ENCODE measurements at regions of chr2 and their contacts with region 1.

Region 1: DNA sequence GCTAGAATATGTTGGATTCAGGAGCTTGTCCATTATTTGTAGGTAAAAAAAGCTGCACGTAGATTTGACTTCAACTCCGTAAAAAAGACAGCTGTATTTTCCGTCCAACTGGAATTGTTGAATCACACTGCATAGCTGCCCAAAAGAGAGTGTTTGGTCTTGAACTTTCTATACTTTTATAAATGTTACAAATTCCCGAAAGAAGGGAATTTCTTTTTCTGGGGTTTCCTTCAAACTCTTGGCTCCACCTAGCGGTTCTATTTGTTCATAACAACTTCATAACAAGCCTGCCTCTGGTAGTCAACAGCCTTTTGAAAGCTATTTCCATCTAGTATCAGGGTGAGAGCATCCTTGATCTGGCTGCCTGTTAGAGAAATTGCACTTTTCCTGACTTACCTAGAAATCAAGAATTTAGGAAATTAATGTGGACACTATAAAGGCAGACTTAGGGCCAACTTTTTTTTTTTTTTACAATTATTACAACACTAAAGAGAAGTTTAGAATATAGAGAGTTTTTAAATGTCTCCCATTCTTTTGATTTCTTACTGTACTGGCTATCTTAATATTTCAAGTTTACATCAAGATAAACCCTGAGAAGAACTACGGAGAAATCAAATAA is 48.1 kb downstream of the TMEM185B start:
- DNase-seq: peak in 5 of 10 donors; percentile 25 to 63 (median 55)
- ATAC-seq: no peak
- H3K4me3 Mint-ChIP-seq: peak overlapping the region in 1 of 10 donors; percentile 5
- H3K27ac Mint-ChIP-seq: peak overlapping the region; percentile 49 to 98 (median 88)
- H3K4me1 Mint-ChIP-seq: peaks cover 13 to 53% (median 47%) of the 10 kb centered on the region in 4 donors
- H3K27me3 Mint-ChIP-seq: no peaks in the 10 kb centered on the region

Region 2: GRCh38 chr2:119678998-119679710 is 495.9 kb before region 1 on chr2 and contains the start of gene TMEM177:
- POLR2A ChIA-PET with region 1: interaction called, 18 read pairs
- DNase-seq: peak; percentile 79 to 92 (median 86)
- ATAC-seq: peak; percentile 79 to 87
- H3K4me3 Mint-ChIP-seq: peak within 1 kb of the TSS; percentile 83 to 98 (median 96)
- H3K27ac Mint-ChIP-seq: peak within 1 kb of the TSS; percentile 91 to 100 (median 94)
- H3K4me1 Mint-ChIP-seq: peaks cover 26 to 47% (median 40%) of the 10 kb centered on the region in 4 donors
- H3K27me3 Mint-ChIP-seq: no peaks in the 10 kb centered on the region
- polyA plus RNA-seq, gene TMEM177: 10.2 to 18.2 (median 15.5) TPM

Region 3: GRCh38 chr2:120012771-120013596 is 162.1 kb before region 1 on chr2 and contains the start of gene EPB41L5:
- POLR2A ChIA-PET with region 1: interaction called, 18 read pairs
- DNase-seq: peak; percentile 62 to 88 (median 72)
- ATAC-seq: peak; percentile 88
- H3K4me3 Mint-ChIP-seq: peak within 1 kb of the TSS; percentile 81 to 92 (median 86)
- H3K27ac Mint-ChIP-seq: peak within 1 kb of the TSS; percentile 33 to 86 (median 75)
- H3K4me1 Mint-ChIP-seq: peaks cover 21 to 34% (median 27%) of the 10 kb centered on the region in 4 donors
- H3K27me3 Mint-ChIP-seq: peaks cover 0 to 1% (median 0%) of the 10 kb centered on the region in 5 donors
- polyA plus RNA-seq, gene EPB41L5: 3.4 to 4.4 (median 3.6) TPM

Region 4: DNA sequence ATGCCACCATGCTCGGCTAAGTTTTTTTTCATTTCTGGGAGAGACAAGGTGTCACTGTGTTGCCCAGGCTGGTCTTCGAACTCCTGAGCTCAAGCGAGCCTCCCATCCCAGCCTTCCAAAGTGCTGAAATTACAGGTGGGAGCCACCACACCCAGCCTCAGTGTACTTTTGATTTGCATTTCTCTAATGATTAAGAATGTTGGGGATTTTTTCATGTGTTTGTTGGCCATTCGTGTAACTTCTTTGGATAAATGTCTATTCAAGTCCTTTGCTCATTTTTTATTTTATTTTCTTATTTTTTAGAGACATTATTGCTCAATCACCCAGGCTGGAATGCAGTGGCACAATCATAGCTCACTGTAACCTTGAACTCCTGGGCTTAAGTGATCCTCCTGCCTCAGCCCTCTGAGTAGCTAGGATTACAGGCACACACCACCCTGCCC is 25.0 kb before region 1 on chr2:
- POLR2A ChIA-PET with region 1: no interaction called
- DNase-seq: no peak
- ATAC-seq: no peak
- H3K4me3 Mint-ChIP-seq: no peak overlapping the region
- H3K27ac Mint-ChIP-seq: no peak overlapping the region
- H3K4me1 Mint-ChIP-seq: no peaks in the 10 kb centered on the region
- H3K27me3 Mint-ChIP-seq: no peaks in the 10 kb centered on the region

Region 5: DNA sequence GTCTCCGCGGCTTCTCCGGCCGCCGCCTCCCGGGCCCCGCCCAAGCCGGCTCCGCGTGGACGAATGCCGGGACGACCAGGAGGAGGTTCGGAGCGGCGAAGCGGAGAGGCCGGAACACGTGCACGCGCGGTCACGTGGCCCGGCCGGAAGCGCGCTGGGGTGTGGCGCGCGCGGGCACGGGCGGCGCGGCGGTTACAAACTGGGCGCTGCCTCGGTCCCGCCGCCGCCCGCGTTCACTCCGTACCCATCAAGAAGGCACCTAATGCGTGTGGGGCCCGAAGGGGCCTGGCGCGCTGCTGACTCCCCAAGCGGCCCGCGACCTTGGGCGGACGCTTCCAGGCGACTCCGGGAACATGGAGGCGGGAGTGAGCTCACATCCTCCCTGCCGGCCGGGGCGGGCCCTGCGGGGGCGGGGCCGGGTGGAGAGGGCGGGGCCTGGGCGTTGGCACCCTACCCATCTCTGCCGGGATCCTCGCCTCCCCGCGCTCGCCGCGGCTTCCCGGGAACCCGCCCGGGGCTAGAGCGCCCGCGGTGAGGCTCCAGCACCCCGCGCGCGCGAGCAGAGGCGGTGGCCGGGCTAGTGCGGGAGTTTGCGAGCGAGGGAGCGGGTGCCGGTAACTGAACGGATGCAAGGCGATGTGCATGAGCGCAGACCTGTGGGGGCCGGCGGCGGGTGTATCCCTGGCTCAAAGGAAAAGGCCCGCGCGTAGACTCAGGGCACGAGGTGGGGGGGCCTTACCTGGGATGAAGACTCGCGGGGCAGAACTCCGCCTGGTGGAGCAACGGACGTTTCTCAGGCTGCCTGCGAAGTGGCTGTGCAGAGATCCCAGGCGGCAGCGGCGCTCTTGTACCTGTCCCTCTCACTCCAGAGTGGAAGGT is 48.2 kb after region 1 on chr2 and contains the start of gene TMEM185B:
- POLR2A ChIA-PET with region 1: interaction called, 28 read pairs
- DNase-seq: peak; percentile 78 to 91 (median 89)
- ATAC-seq: peak; percentile 91 to 92
- H3K4me3 Mint-ChIP-seq: peak within 1 kb of the TSS; percentile 77 to 93 (median 86)
- H3K27ac Mint-ChIP-seq: peak within 1 kb of the TSS; percentile 84 to 96 (median 91)
- H3K4me1 Mint-ChIP-seq: peaks cover 10 to 68% (median 66%) of the 10 kb centered on the region in 4 donors
- H3K27me3 Mint-ChIP-seq: no peaks in the 10 kb centered on the region
- polyA plus RNA-seq, gene TMEM185B: 12.7 to 16.7 (median 13.8) TPM

Region 6: GRCh38 chr2:120252225-120253021 is 77.4 kb after region 1 on chr2 and contains the start of gene RALB:
- POLR2A ChIA-PET with region 1: interaction called, 13 read pairs
- DNase-seq: peak; percentile 96 to 99 (median 98)
- ATAC-seq: peak; percentile 93 to 95
- H3K4me3 Mint-ChIP-seq: peak within 1 kb of the TSS; percentile 96 to 100 (median 98)
- H3K27ac Mint-ChIP-seq: peak within 1 kb of the TSS; percentile 94 to 99 (median 98)
- H3K4me1 Mint-ChIP-seq: peaks cover 31 to 48% (median 46%) of the 10 kb centered on the region in 4 donors
- H3K27me3 Mint-ChIP-seq: peaks cover 0 to 11% (median 2%) of the 10 kb centered on the region in 5 donors
- polyA plus RNA-seq, gene RALB: 17.6 to 25.8 (median 19.1) TPM